Endothelial cell of umbilical vein (primary cell): ENCODE measurements at regions of chr10 and their contacts with region 1.

Region 1: GRCh38 chr10:54133203-54133602 is 667.8 kb downstream of the PCDH15 start:
- DNase-seq: peak; percentile 22
- H3K4me3 ChIP-seq: no peak overlapping the region
- H3K27ac ChIP-seq: no peak overlapping the region
- H3K4me1 ChIP-seq: no peaks in the 10 kb centered on the region
- H3K27me3 ChIP-seq: no peaks in the 10 kb centered on the region
- CTCF ChIP-seq: peak; percentile 22 to 35
- POLR2A ChIP-seq: no peak

Region 2: DNA sequence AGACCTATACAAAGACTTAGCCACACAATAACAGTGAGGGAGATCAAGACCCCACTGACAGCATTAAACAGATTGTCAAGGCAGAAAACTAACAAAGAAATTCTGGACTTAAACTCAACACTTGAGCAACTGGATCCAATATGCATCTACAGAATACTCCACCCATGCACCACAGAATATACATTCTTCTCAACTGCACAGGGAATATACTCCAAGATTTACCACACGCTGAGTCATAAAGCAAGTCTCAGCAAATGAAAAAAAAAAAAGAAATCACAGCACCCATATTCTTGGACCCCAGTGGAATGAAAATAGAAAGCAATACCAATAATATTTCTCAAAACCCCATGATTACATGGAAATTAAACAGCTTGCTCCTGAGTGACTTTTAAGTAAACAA is 12.4 kb before region 1 on chr10:
- CTCF ChIA-PET with region 1: interaction called, 10 read pairs
- POLR2A ChIA-PET with region 1: no interaction called
- dilution Hi-C with region 1: no loop called
- intact Hi-C with region 1: no loop called
- DNase-seq: no peak
- H3K4me3 ChIP-seq: no peak overlapping the region
- H3K27ac ChIP-seq: no peak overlapping the region
- H3K4me1 ChIP-seq: no peaks in the 10 kb centered on the region
- H3K27me3 ChIP-seq: no peaks in the 10 kb centered on the region
- CTCF ChIP-seq: no peak
- POLR2A ChIP-seq: no peak

Region 3: GRCh38 chr10:54800741-54801421 is 667.7 kb after region 1 on chr10 and contains the start of gene PCDH15:
- CTCF ChIA-PET with region 1: interaction called, 16 read pairs
- POLR2A ChIA-PET with region 1: no interaction called
- dilution Hi-C with region 1: no loop called
- intact Hi-C with region 1: no loop called
- DNase-seq: peak; percentile 80
- H3K4me3 ChIP-seq: no peak within 1 kb of the TSS
- H3K27ac ChIP-seq: no peak within 1 kb of the TSS
- H3K4me1 ChIP-seq: peaks cover 19% of the 10 kb centered on the region
- H3K27me3 ChIP-seq: no peaks in the 10 kb centered on the region
- CTCF ChIP-seq: peak; percentile 31 to 66
- POLR2A ChIP-seq: no peak
- total RNA-seq, gene PCDH15: not detected in 2 replicates